ENCODE measurements at regions of chr12 and their contacts with region 1.

Region 1: DNA sequence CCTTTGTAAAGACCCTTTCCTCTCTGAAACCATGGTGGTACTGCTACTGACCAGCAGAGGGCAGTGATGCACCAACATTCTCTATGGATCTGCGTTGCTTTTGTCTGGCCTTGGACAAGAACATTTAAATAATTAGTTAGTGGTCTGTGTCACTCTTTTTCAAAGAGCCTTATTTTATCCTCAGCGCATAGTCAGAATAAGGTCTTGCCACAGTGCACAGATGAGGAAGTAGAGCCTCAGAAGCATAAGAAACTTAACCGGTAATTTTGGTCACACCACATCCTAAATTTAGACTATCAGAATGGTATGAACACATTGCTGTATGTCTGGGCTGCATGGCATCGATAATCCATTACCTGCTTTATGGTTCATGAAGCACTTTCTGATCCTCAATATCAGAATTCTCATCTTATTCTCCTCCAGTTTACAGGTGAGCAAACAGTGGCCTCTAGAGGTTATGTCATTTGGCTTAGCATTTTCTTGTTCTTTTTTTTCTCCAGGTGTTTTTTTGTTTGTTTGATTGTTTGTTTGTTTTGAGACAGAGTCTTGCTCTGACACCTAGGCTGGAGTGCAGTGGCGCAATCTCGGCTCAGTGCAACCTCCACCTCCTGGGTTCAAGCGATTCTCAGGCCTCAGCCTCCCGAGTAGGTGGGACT is 23.7 kb upstream of the IFT81 start:
- DNase-seq: peak; percentile 47 to 91 (median 76)
- H3K4me3 ChIP-seq: no peak overlapping the region
- H3K27ac ChIP-seq: peak overlapping the region in 2 of 5 donors; percentile 20 to 35
- H3K4me1 ChIP-seq: peaks cover 0 to 18% of the 10 kb centered on the region in 2 donors
- H3K27me3 ChIP-seq: no peaks in the 10 kb centered on the region
- CTCF ChIP-seq: peak; percentile 84 to 97 (median 93)
- POLR2A ChIP-seq: no peak

Region 2: GRCh38 chr12:110224379-110225304 is 124.2 kb after region 1 on chr12:
- intact Hi-C with region 1: loop called in 1 of 2 experiments (anchors 10 kb)
- DNase-seq: peak; percentile 32 to 66 (median 48)
- H3K4me3 ChIP-seq: peak overlapping the region in 1 of 4 donors; percentile 41
- H3K27ac ChIP-seq: peak overlapping the region; percentile 65 to 85 (median 82)
- H3K4me1 ChIP-seq: peaks cover 21 to 36% of the 10 kb centered on the region in 2 donors
- H3K27me3 ChIP-seq: no peaks in the 10 kb centered on the region
- CTCF ChIP-seq: peak; percentile 46 to 81 (median 78)
- POLR2A ChIP-seq: peak in 1 of 2 donors; percentile 42

Region 3: GRCh38 chr12:110426406-110426805 is 326.0 kb after region 1 on chr12:
- intact Hi-C with region 1: loop called (anchors 5 kb)
- DNase-seq: no peak
- H3K4me3 ChIP-seq: no peak overlapping the region
- H3K27ac ChIP-seq: no peak overlapping the region
- H3K4me1 ChIP-seq: no peaks in the 10 kb centered on the region
- H3K27me3 ChIP-seq: no peaks in the 10 kb centered on the region
- CTCF ChIP-seq: no peak
- POLR2A ChIP-seq: no peak

Region 4: DNA sequence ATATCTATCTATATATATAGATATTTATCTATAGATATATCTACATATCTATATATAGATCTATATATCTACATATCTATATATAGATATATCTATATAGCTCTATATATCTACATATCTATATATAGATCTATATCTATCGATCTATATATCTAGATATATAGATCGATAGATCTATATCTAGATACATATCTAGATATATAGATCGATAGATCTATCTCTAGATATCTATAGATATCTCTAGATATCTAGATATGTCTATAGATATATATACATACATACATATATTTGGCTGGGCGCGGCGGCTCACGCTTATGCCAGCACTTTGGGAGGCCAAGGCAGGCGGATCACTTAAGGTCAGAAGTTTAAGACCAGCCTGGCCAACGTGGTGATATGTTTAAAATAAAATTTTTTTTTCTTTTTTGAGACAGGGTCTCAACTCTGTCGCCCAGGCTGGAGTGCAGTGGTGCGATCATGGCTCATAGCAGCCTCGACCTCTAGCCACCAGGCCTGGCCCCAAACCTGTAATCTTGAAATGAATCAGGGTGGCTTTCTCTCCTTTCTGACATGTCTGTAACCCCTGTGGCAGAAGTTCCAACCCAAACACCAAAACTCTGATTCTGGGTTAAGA is 331.6 kb after region 1 on chr12:
- intact Hi-C with region 1: loop called (anchors 5 kb)
- DNase-seq: peak in 1 of 7 donors; percentile 51
- H3K4me3 ChIP-seq: peak overlapping the region in 2 of 4 donors; percentile 19 to 55
- H3K27ac ChIP-seq: peak overlapping the region in 1 of 5 donors; percentile 17
- H3K4me1 ChIP-seq: peaks cover 0 to 4% of the 10 kb centered on the region in 2 donors
- H3K27me3 ChIP-seq: no peaks in the 10 kb centered on the region
- CTCF ChIP-seq: no peak
- POLR2A ChIP-seq: no peak

Measured in adrenal gland (tissue), 19 donors.